Caco-2 (cell line): ENCODE measurements at regions of chr6 and their contacts with region 1.

Region 1: GRCh38 chr6:13924146-13924948 is 405 bp upstream of the RNF182 start:
- DNase-seq: no peak
- H3K4me3 ChIP-seq: peak overlapping the region; percentile 37
- H3K4me3 Mint-ChIP-seq: peak overlapping the region; percentile 77
- H3K27ac Mint-ChIP-seq: no peak overlapping the region
- H3K4me1 ChIP-seq: no peaks in the 10 kb centered on the region
- H3K4me1 Mint-ChIP-seq: peaks cover 11% of the 10 kb centered on the region
- H3K27me3 ChIP-seq: peaks cover 5% of the 10 kb centered on the region
- H3K27me3 Mint-ChIP-seq: peaks cover 14% of the 10 kb centered on the region
- CTCF ChIP-seq: no peak

Region 2: GRCh38 chr6:13593720-13594119 is 330.6 kb before region 1 on chr6:
- CTCF ChIA-PET with region 1: no interaction called
- POLR2A ChIA-PET with region 1: no interaction called
- intact Hi-C with region 1: no loop called
- DNase-seq: no peak
- H3K4me3 ChIP-seq: no peak overlapping the region
- H3K4me3 Mint-ChIP-seq: no peak overlapping the region
- H3K27ac Mint-ChIP-seq: no peak overlapping the region
- H3K4me1 ChIP-seq: no peaks in the 10 kb centered on the region
- H3K4me1 Mint-ChIP-seq: no peaks in the 10 kb centered on the region
- H3K27me3 ChIP-seq: no peaks in the 10 kb centered on the region
- H3K27me3 Mint-ChIP-seq: no peaks in the 10 kb centered on the region
- CTCF ChIP-seq: no peak

Region 3: DNA sequence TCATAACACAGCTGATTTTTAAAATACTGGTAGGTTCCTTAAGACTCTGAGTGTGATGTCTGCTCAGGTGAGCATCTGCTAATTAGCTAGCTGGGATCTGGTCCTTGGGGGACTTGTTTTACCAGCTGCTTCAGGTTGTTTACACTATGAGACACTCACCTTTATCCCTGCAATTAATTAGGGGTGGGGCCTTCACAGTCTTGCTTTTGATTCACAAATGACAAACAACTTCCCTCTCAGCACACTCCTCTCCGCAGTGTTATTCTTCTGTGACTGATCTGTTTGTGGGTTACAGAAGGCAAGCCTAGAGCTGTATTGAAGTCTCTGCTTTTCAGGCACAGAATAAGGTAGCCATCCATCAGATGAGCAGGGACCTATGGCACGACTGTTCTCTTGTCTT is 131.2 kb after region 1 on chr6:
- CTCF ChIA-PET with region 1: no interaction called
- POLR2A ChIA-PET with region 1: no interaction called
- intact Hi-C with region 1: no loop called
- DNase-seq: no peak
- H3K4me3 ChIP-seq: no peak overlapping the region
- H3K4me3 Mint-ChIP-seq: no peak overlapping the region
- H3K27ac Mint-ChIP-seq: no peak overlapping the region
- H3K4me1 ChIP-seq: no peaks in the 10 kb centered on the region
- H3K4me1 Mint-ChIP-seq: no peaks in the 10 kb centered on the region
- H3K27me3 ChIP-seq: no peaks in the 10 kb centered on the region
- H3K27me3 Mint-ChIP-seq: peaks cover 6% of the 10 kb centered on the region
- CTCF ChIP-seq: no peak

Region 4: DNA sequence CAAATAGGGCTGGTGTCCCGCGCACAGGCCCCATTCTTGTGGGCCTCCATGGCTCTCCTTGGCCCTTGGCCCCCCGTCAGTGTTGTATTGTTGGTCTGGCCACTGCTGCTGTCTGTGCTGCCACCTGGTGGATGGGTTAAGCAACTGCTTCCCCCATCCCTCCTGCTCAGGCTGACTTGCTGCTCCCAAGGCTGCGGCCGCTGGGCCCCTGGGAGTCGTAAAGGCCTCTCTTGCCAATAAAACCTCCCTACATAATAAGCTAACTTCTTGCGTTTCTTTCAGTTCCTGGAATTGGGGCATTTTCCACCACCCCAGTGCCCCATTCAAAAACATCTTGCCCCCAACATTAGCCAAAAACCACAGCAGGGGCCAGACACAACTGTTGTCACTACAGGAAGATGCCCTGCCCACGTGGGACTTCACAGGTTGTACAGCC is 220.3 kb after region 1 on chr6:
- CTCF ChIA-PET with region 1: no interaction called
- POLR2A ChIA-PET with region 1: no interaction called
- intact Hi-C with region 1: loop called (anchors 5 kb)
- DNase-seq: peak; percentile 73 to 82
- H3K4me3 ChIP-seq: no peak overlapping the region
- H3K4me3 Mint-ChIP-seq: no peak overlapping the region
- H3K27ac Mint-ChIP-seq: no peak overlapping the region
- H3K4me1 ChIP-seq: no peaks in the 10 kb centered on the region
- H3K4me1 Mint-ChIP-seq: no peaks in the 10 kb centered on the region
- H3K27me3 ChIP-seq: no peaks in the 10 kb centered on the region
- H3K27me3 Mint-ChIP-seq: peaks cover 2% of the 10 kb centered on the region
- CTCF ChIP-seq: peak; percentile 82 to 92